ENCODE measurements at regions of chr9 and their contacts with region 1.

Region 1: DNA sequence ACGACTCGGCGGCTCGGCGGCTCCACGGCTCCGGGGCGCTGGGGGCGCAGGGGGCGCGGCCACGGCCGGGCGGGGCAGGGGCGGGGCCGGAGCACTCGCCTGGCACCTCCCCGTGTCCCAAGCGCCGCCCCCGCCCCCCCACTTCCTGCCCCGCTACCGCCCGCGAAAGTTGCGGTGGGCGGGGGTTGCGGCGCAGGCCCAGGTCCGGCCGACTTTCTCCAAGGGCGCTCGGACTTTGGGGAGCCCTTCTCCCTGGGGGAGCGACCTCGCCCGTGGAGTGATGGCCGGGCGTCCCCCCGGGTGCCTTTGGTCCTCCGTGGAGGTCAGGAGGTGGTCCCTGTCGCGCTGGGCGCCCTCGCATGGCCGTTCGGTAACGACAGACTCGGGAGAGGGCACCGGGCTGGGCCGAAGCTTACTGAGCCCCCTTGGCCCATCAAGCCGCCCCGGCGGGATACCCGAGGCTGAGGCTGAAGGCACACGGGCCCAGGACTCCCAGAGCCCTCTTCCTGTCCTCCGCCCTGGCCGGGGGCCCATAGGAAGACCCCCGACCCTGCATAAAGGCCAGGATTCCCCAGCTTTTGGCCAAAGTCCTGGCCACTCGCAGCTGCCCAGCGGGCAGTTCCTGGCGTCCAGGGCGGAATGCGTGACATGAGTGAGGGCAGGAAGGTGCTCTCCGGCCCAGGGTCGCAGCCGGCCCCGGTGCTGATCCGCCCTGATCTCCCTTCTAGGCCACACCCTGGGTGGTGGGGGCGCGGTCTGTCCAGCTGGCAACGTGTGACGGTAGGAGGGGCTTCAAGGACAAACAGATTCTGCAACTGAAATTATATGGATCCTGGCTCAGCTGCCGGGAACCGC is 883 bp upstream of the VAV2 start:
- DNase-seq: no peak
- ATAC-seq: peak; percentile 78
- H3K4me3 ChIP-seq: peak overlapping the region; percentile 66 to 77
- H3K27ac ChIP-seq: peak overlapping the region; percentile 86
- H3K4me1 ChIP-seq: peaks cover 14% of the 10 kb centered on the region
- H3K27me3 ChIP-seq: no peaks in the 10 kb centered on the region
- CTCF ChIP-seq: peak; percentile 75

Region 2: GRCh38 chr9:133726401-133727276 is 266.4 kb before region 1 on chr9:
- CTCF ChIA-PET with region 1: interaction called, 11 read pairs
- POLR2A ChIA-PET with region 1: no interaction called
- in situ Hi-C with region 1: no loop called
- intact Hi-C with region 1: no loop called
- DNase-seq: no peak
- ATAC-seq: peak; percentile 88
- H3K4me3 ChIP-seq: no peak overlapping the region
- H3K27ac ChIP-seq: no peak overlapping the region
- H3K4me1 ChIP-seq: peaks cover 2% of the 10 kb centered on the region; the same call in 1 of the 2 replicates
- H3K27me3 ChIP-seq: peaks cover 4% of the 10 kb centered on the region
- CTCF ChIP-seq: peak; percentile 63

Region 3: GRCh38 chr9:133782157-133783130 is 210.6 kb before region 1 on chr9:
- CTCF ChIA-PET with region 1: interaction called, 16 read pairs
- POLR2A ChIA-PET with region 1: no interaction called
- in situ Hi-C with region 1: no loop called
- intact Hi-C with region 1: no loop called
- DNase-seq: peak; percentile 4
- ATAC-seq: peak; percentile 87
- H3K4me3 ChIP-seq: no peak overlapping the region
- H3K27ac ChIP-seq: no peak overlapping the region
- H3K4me1 ChIP-seq: no peaks in the 10 kb centered on the region
- H3K27me3 ChIP-seq: no peaks in the 10 kb centered on the region
- CTCF ChIP-seq: peak; percentile 86

Region 4: DNA sequence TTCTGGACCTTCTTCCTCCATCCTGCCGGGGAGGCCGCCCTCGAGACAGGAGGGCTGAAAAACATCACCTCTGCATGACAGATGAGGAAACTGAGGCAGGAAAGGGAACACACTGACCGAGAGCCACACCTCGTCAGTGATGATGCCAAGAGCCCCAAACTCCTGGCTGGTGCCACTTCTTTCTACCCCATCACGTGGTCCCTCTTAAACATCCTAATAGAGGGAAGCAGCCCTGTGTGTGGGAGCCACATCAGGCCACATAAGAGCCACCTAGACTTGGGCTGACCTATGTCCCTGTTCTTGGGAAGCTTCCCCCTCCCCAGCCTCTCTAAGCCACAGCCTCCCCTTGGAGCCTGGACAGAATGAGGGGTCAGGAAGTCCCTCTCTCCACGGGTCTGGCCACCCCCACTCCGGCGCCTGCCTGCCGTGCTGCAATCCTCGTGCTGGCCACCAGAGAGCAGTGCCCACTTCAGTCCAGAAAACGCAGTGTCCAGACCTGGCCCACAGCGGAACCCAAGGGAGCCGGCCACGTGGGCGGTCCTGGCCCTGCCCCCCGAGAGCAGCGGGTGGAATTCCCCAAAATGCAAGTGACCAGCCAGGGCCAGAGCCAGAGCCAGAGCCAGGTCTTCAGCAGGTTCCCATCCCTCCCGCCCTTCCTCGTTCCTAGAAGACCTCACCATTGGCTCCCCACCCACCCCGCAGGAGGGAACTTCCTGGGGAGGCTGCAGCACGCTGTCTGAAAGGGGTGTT is 200.1 kb before region 1 on chr9:
- CTCF ChIA-PET with region 1: no interaction called
- POLR2A ChIA-PET with region 1: no interaction called
- in situ Hi-C with region 1: no loop called
- intact Hi-C with region 1: loop called (anchors 1 kb)
- DNase-seq: peak; percentile 41
- ATAC-seq: peak; percentile 89
- H3K4me3 ChIP-seq: no peak overlapping the region
- H3K27ac ChIP-seq: no peak overlapping the region
- H3K4me1 ChIP-seq: peaks cover 6% of the 10 kb centered on the region
- H3K27me3 ChIP-seq: no peaks in the 10 kb centered on the region
- CTCF ChIP-seq: peak; percentile 88

Region 5: DNA sequence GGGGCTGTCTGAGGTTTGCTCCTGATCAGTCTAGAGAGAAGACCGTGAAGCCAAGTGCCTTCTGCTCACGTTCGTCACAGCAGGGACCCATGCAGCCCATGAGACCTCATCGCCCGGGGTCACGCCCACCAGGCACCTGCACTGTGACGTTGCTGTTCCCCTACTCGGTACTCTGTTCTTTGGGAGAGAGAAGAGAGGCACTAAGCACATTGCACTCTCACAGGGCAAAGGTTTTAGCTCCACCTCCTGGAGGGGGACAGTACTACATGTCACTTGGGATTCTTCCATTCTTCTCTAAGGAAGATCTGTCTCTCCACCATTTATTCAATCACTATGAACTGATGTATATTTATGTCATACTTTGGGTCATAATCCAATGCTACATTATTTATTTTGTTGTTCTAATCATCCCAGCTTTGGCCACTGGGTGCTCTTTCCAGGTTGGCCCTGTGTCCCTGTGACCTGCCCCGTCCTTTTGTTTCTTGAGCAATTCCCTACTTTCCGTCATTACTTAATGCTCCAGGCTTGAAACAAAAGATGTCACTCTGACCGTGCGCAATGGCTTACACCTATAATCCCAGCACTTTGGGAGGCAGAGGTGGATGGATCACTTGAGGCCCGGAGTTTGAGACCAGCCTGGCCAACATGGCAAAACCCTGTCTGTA is 106.2 kb after region 1 on chr9:
- CTCF ChIA-PET with region 1: interaction called, 11 read pairs
- POLR2A ChIA-PET with region 1: no interaction called
- in situ Hi-C with region 1: no loop called
- intact Hi-C with region 1: no loop called
- DNase-seq: peak; percentile 59
- ATAC-seq: peak; percentile 83
- H3K4me3 ChIP-seq: no peak overlapping the region
- H3K27ac ChIP-seq: no peak overlapping the region
- H3K4me1 ChIP-seq: no peaks in the 10 kb centered on the region
- H3K27me3 ChIP-seq: no peaks in the 10 kb centered on the region
- CTCF ChIP-seq: peak; percentile 87

Measured in Panc1 (cell line).